ENCODE measurements at regions of chr2 and their contacts with region 1.

Region 1: GRCh38 chr2:10122386-10123280 is at the start of gene RRM2:
- DNase-seq: peak; percentile 98
- ATAC-seq: peak; percentile 82
- H3K4me3 Mint-ChIP-seq: peak within 1 kb of the TSS; percentile 97
- H3K27ac Mint-ChIP-seq: peak within 1 kb of the TSS; percentile 98
- H3K4me1 Mint-ChIP-seq: peaks cover 37% of the 10 kb centered on the region
- H3K27me3 Mint-ChIP-seq: no peaks in the 10 kb centered on the region
- total RNA-seq, gene RRM2: 382 to 469 TPM

Region 2: GRCh38 chr2:9753276-9753600 is 369.4 kb before region 1 on chr2:
- CTCF ChIA-PET with region 1: no interaction called
- POLR2A ChIA-PET with region 1: no interaction called
- intact Hi-C with region 1: loop called in 1 of 2 experiments (anchors 5 kb)
- DNase-seq: peak; percentile 84
- ATAC-seq: peak; percentile 84
- H3K4me3 Mint-ChIP-seq: peak overlapping the region; percentile 66
- H3K27ac Mint-ChIP-seq: peak overlapping the region; percentile 96
- H3K4me1 Mint-ChIP-seq: peaks cover 61% of the 10 kb centered on the region
- H3K27me3 Mint-ChIP-seq: peaks cover 18% of the 10 kb centered on the region

Region 3: DNA sequence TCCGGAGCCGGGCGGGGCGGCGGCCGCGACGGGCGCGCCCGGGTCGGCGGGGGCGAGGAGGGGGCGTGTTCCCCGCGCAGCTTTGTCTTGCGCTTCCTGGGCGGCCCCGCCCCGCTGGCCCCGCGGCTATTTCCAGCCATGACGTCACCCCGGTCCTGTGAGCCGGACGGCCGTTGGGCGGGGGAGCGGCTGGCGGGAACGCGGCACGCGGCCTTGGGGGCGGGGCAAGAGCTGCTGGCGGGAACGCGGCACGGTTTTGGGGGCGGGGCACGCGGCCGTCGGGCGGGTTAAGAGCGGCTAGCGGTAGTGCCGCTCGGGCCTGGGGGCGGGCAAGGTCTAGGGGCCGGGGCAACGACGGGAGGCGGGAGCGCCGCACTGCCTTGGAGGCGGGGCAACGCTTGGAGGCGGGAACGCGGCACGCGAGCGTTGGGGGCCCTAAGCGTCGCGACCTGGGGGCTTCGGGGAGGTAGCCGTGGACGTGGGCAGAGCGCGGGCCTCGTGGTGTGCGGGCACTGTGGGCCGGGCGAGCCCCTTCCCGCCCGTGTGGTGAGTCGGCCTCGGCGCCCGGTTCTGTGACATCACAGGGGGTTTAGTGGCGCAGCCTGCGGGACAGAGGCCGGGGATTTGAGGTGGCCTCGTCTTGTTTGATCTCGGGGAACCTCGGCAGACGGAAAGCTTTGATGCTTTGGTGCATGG is 78.6 kb before region 1 on chr2:
- CTCF ChIA-PET with region 1: no interaction called
- POLR2A ChIA-PET with region 1: interaction called, 4 read pairs
- intact Hi-C with region 1: loop called in 1 of 2 experiments (anchors 1 kb)
- DNase-seq: peak; percentile 95
- ATAC-seq: peak; percentile 81
- H3K4me3 Mint-ChIP-seq: peak overlapping the region; percentile 66
- H3K27ac Mint-ChIP-seq: peak overlapping the region; percentile 78
- H3K4me1 Mint-ChIP-seq: peaks cover 12% of the 10 kb centered on the region
- H3K27me3 Mint-ChIP-seq: peaks cover 3% of the 10 kb centered on the region

Region 4: DNA sequence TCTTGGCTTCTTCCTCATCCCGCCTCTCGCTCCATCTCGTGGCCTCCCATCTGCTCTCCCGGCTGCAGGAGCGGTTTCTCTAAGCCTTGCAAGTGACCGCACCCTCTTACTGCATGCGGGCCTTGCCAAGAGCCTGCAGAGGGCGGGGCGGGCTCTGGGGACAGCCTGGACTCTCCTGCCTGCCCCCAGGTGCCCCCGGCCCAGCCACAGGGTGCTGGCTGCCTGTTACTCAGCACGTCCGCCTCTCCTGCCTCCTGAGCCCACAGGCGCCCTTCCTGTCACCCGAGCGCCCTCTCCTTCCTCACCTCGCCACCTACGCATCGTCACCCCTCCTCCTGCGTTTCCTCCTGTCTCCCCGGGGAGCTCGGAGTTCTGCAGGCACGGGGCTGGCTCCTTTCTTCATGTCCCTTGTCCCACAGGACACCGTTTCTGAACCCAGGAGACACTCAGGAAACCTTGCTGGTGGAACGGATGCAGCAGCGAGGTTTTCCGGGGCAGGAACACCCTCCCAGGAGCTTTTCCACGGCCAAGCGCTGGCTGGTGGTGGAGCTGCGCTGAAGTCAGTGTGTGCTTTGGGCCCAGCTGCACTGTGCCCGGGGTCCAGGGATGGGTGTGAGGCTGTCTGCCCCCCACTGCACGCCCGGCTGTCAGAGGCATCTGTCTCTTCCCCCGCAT is 208.5 kb after region 1 on chr2:
- CTCF ChIA-PET with region 1: interaction called, 6 read pairs
- POLR2A ChIA-PET with region 1: no interaction called
- intact Hi-C with region 1: loop called (anchors 1 to 2 kb)
- DNase-seq: peak; percentile 93
- ATAC-seq: peak; percentile 58
- H3K4me3 Mint-ChIP-seq: peak overlapping the region; percentile 91
- H3K27ac Mint-ChIP-seq: peak overlapping the region; percentile 92
- H3K4me1 Mint-ChIP-seq: peaks cover 81% of the 10 kb centered on the region
- H3K27me3 Mint-ChIP-seq: no peaks in the 10 kb centered on the region

Region 5: DNA sequence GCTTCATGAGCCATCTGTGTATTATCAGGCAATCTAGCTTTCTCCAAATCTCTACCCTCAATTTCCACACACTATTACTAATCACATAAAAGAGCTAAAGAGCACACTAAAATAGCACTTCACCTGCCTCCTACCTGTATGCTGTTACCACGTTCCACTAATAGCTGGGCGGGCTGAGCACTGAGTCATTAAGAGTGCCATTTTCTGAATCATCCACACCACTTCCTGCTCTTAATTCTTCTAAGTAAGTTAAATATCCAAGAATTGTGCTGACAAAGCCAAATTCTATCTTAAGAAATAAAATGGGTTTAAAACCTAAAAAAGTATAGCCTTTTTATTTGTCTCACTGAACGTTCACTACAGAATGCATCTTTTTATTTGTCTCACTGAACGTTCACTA is 531.4 kb after region 1 on chr2:
- CTCF ChIA-PET with region 1: no interaction called
- POLR2A ChIA-PET with region 1: interaction called, 3 read pairs
- intact Hi-C with region 1: loop called (anchors 1 to 10 kb)
- DNase-seq: peak; percentile 81
- ATAC-seq: peak; percentile 97
- H3K4me3 Mint-ChIP-seq: peak overlapping the region; percentile 9
- H3K27ac Mint-ChIP-seq: peak overlapping the region; percentile 89
- H3K4me1 Mint-ChIP-seq: peaks cover 47% of the 10 kb centered on the region
- H3K27me3 Mint-ChIP-seq: no peaks in the 10 kb centered on the region

Region 6: DNA sequence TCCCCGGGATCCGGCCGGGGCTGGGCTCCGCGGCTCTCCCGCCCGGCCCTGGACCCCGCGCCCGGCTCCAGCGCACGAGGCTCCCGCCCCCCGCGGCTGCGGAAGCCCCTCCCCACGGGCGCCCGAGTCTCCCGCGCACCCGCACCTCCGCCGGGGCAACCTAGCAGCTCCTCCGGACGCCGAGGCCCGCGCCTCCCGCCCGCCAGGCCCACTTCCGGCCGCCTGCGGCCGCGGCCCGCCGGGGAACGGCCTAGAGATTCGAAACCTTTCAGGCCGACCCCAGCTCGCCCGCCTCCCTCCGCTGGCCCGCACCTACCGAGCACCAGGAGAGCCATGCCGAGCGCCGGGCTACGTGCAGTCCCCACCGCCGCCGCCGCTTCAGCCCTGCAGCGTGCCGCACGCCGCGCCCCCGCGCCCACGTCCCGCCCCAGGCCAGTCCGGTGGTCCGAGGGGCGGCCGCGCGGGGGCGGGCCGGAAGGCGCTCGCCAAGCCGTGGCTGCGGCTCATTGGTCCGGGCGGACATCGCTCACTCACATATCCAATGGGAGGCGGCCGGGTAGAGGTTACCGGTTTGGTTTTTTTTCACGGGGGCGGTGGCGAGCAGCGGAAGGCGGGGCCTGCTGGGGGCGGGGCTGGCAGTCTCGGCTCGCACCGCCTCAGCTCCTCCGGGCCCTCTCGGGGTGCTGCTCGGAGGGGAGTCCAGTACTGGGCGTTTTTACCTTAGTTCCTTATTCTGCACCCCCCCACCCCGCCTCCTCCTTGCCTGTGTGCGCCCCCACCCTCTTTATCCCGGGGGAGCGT is 689.9 kb after region 1 on chr2 and contains the start of gene PDIA6:
- CTCF ChIA-PET with region 1: no interaction called
- POLR2A ChIA-PET with region 1: no interaction called
- intact Hi-C with region 1: loop called in 1 of 2 experiments (anchors 2 kb)
- DNase-seq: peak; percentile 97
- ATAC-seq: peak; percentile 94
- H3K4me3 Mint-ChIP-seq: peak within 1 kb of the TSS; percentile 89
- H3K27ac Mint-ChIP-seq: peak within 1 kb of the TSS; percentile 90
- H3K4me1 Mint-ChIP-seq: peaks cover 34% of the 10 kb centered on the region
- H3K27me3 Mint-ChIP-seq: peaks cover 1% of the 10 kb centered on the region
- total RNA-seq, gene PDIA6: 123 to 157 TPM

Measured in activated CD4-positive, alpha-beta T cell treated with anti-CD3 and anti-CD28 coated beads for 36 hours (primary cell).